A549 (cell line): ENCODE measurements at regions of chr6 and their contacts with region 1.

Region 1: DNA sequence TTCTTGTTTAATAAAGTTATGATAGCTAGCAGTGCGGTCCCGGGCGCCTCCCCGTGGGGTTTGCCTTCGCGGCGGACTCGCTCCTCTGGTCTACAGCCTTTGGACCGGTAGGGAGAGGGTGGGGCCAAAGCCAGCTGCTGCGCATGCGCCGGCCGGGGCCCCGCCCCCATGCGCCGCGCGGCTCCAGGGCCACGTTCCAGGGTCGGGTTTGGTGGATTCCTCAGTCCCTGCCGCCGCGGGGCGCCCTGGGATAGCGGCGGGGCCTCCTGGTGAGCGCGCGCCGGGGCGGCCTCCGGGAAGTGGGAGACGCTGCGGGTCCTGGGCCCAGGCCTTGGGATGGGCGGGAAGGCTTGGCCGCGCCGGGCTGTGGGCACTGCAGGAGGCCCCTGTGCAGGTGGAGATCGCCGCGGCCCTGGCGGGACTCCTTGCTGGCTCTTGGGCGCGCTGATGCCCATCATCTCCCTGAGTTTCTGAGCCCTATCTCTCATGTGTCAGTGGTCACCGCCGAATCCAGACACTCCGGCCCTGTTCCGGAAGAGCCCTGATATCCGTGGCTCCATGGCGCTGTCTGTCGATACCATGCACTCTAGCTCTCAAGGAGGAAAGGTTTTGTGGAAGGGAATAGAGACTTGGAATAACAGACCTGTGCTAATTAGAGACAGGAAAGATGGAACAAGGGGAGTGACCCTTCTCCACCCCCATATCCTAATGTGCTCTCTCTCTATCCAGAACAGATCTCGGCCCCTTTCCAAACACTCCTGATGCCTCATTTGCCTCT is at the start of gene VARS2:
- DNase-seq: peak; percentile 86 to 88
- ATAC-seq: peak; percentile 87 to 93
- H3K4me3 ChIP-seq: peak within 1 kb of the TSS; percentile 60
- H3K27ac ChIP-seq: peak within 1 kb of the TSS; percentile 97
- H3K4me1 ChIP-seq: peaks cover 19% of the 10 kb centered on the region
- CTCF ChIP-seq: peak; percentile 44; the same call in 2 of the 3 replicates
- EP300 ChIP-seq: no peak
- POLR2A ChIP-seq: peak; percentile 68
- RAD21 ChIP-seq: peak; percentile 33 to 56
- polyA plus RNA-seq, gene VARS2: 15.5 and 16.1 TPM in 2 replicates

Region 2: DNA sequence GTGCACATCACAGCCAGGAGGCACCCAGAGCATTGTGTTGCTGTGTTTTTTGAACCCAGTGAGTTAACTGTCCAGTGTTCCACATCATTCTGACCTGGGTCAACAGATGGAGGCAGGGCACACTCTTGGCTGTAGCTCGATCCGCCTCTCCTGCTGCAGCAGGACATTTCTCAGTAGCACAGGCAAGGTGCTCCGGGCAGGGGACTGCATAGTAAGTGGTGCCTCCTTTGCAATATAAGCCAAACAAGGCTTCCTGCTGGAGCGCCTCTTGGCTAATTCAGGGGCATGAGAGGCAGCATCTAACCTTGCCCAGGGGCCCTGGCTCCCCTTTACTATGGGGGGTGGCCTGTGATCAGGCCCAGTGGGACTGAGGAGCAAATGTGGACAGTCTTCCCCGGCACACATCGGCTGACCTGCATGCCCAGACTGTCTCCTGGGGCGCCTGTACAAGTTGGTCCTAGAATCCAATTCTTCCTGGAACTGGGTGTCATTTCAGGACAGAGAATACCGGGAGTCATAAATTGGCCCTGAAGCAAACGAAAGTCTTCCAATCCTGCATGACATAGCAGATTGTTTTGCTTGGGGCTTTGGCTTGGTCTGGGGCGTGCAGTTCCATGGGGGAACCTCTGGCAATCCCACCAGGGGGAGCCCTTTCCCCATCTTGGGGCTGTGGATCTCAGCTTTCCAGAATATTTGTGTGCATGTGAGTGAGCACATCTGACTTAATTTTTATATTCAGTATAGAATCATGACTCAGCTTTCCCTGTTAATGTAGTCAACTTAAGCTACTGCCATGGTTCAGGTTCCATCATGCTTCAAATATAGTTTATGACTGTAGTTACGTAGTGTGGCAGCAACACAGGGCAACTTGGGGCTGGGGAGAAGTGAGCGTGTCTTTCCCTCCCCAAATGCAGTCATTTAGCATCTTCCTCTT is 86.0 kb before region 1 on chr6:
- CTCF ChIA-PET with region 1: interaction called, 38 read pairs
- POLR2A ChIA-PET with region 1: interaction called, 4 read pairs
- DNase-seq: peak; percentile 70 to 84
- ATAC-seq: peak; percentile 91 to 95
- H3K4me3 ChIP-seq: no peak overlapping the region
- H3K27ac ChIP-seq: peak overlapping the region; percentile 91 to 95
- H3K4me1 ChIP-seq: peaks cover 27% of the 10 kb centered on the region
- CTCF ChIP-seq: peak; percentile 91
- EP300 ChIP-seq: no peak
- POLR2A ChIP-seq: no peak
- RAD21 ChIP-seq: peak; percentile 92 to 95

Region 3: GRCh38 chr6:30935018-30935417 is 20.8 kb after region 1 on chr6:
- CTCF ChIA-PET with region 1: interaction called, 51 read pairs
- POLR2A ChIA-PET with region 1: no interaction called
- DNase-seq: no peak
- ATAC-seq: no peak
- H3K4me3 ChIP-seq: no peak overlapping the region
- H3K27ac ChIP-seq: no peak overlapping the region
- H3K4me1 ChIP-seq: peaks cover 11% of the 10 kb centered on the region
- CTCF ChIP-seq: no peak
- EP300 ChIP-seq: no peak
- POLR2A ChIP-seq: no peak
- RAD21 ChIP-seq: no peak

Region 4: GRCh38 chr6:30981942-30982772 is 67.9 kb after region 1 on chr6:
- CTCF ChIA-PET with region 1: no interaction called
- POLR2A ChIA-PET with region 1: no interaction called
- DNase-seq: peak in 1 of 2 experiments; percentile 14
- ATAC-seq: peak in 1 of 2 experiments; percentile 79; a peak in 3 of 6 replicates
- H3K4me3 ChIP-seq: no peak overlapping the region
- H3K27ac ChIP-seq: no peak overlapping the region
- H3K4me1 ChIP-seq: no peaks in the 10 kb centered on the region
- CTCF ChIP-seq: no peak
- EP300 ChIP-seq: no peak
- POLR2A ChIP-seq: no peak
- RAD21 ChIP-seq: no peak

Region 5: DNA sequence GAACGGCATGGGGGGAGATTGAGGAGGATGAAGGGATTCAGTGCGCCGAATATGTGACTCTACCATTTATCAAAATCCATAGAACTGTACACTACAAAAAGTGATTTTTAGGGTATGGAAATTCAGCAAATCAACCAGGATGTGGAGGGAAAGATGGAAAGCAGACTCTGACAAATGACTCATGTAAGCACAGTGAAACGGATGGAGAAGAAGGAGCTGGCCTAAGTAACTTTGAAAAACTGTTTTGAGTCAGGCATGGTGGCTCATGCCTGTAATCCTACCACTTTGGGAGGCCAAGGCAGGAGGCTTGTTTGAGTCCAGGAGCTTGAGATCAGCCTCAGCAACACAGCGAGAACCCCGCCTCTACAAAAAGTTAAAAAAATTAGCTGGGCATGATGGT is 135.3 kb after region 1 on chr6:
- CTCF ChIA-PET with region 1: interaction called, 17 read pairs
- POLR2A ChIA-PET with region 1: no interaction called
- DNase-seq: no peak
- ATAC-seq: no peak
- H3K4me3 ChIP-seq: no peak overlapping the region
- H3K27ac ChIP-seq: no peak overlapping the region
- H3K4me1 ChIP-seq: peaks cover 3% of the 10 kb centered on the region; the same call in 1 of the 3 replicates
- CTCF ChIP-seq: no peak
- EP300 ChIP-seq: no peak
- POLR2A ChIP-seq: no peak
- RAD21 ChIP-seq: no peak

Region 6: GRCh38 chr6:31079656-31080261 is 165.5 kb after region 1 on chr6:
- CTCF ChIA-PET with region 1: interaction called, 95 read pairs
- POLR2A ChIA-PET with region 1: interaction called, 7 read pairs
- DNase-seq: peak; percentile 53 to 55
- ATAC-seq: peak; percentile 81 to 91
- H3K4me3 ChIP-seq: no peak overlapping the region
- H3K27ac ChIP-seq: peak overlapping the region in 1 of 2 experiments; percentile 84; a peak in 3 of 6 replicates
- H3K4me1 ChIP-seq: no peaks in the 10 kb centered on the region
- CTCF ChIP-seq: peak; percentile 72
- EP300 ChIP-seq: no peak
- POLR2A ChIP-seq: no peak
- RAD21 ChIP-seq: peak; percentile 70 to 71

Region 7: DNA sequence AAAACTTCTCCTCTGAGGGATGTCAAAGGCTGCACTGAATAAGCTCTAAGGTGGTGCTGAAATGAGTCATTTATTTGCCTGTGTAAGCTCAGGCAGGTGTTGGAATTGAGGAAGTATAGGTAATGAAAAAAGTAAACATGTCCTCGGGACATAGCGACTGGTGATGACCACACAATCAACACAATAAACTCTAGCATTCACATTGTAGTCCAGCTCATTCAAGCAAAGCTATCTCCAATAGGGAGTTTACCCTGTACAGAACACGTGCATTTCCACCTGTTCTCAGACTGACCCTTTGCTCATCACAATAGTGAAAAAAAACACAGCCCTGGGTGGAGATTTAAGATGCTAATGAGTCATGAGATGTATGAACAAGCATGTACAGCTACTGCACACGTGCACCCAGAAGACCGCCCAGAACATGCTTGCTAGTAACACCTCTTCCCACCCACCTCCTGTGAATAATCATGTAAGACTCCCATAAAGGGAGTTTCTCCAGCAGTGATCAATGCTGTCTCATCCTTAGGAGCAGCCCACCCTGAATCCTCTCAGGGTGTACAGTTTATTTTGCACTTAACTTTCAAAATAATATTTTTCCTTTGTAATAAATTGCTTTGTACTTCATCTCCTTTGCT is 289.2 kb after region 1 on chr6:
- CTCF ChIA-PET with region 1: no interaction called
- POLR2A ChIA-PET with region 1: no interaction called
- DNase-seq: peak; percentile 17 to 51
- ATAC-seq: peak; percentile 68 to 71
- H3K4me3 ChIP-seq: peak overlapping the region; percentile 45
- H3K27ac ChIP-seq: peak overlapping the region; percentile 87 to 88
- H3K4me1 ChIP-seq: peaks cover 14% of the 10 kb centered on the region
- CTCF ChIP-seq: no peak
- EP300 ChIP-seq: no peak
- POLR2A ChIP-seq: no peak
- RAD21 ChIP-seq: no peak